ENCODE measurements at regions of chr16 and their contacts with region 1.

Region 1: DNA sequence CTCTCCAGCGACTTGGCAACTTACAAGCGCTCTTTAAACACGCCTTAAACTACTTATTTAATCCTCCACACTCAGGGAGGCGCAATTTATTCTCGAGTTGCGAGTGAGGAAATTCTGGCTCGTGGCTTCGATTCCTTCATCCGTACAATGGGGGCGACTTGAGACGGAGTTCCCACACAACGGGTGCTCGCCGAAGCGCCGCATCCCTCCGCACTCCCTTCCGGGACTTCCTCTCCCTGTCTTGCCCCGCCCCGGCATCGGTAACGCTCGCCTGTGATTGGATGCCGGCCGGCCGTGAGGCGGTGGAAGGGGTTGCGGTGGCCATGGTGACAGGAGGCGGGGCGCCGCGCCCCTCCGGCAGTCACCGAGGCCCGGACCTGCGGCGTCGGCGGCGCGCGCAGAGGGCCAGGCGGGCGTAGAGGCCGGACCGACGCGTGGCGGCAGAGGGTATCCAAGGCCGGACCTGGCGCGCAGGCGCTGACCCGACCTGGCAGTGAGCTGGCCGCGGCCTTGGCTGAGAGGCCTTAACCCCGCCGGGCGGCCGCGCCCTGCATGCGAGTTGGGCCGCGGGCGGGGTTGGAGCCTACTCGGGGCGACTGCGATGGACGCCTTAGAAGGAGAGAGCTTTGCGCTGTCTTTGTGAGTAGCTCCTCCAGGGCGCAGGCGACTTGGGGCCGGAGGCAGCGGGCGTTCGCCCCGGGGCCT is at the start of gene ARL2BP:
- DNase-seq: peak; percentile 99
- ATAC-seq: peak; percentile 99
- H3K4me3 ChIP-seq: peak within 1 kb of the TSS; percentile 55 to 97
- H3K27ac ChIP-seq: peak within 1 kb of the TSS; percentile 78 to 85
- H3K4me1 ChIP-seq: no peaks in the 10 kb centered on the region
- H3K27me3 ChIP-seq: no peaks in the 10 kb centered on the region
- total RNA-seq, gene ARL2BP: 39.1 to 47.5 TPM

Region 2: GRCh38 chr16:57113042-57113453 is 131.9 kb before region 1 on chr16:
- intact Hi-C with region 1: no loop called
- DNase-seq: no peak
- ATAC-seq: no peak
- H3K4me3 ChIP-seq: no peak overlapping the region
- H3K27ac ChIP-seq: peak overlapping the region in 1 of 2 donors; percentile 21
- H3K4me1 ChIP-seq: no peaks in the 10 kb centered on the region
- H3K27me3 ChIP-seq: no peaks in the 10 kb centered on the region

Region 3: DNA sequence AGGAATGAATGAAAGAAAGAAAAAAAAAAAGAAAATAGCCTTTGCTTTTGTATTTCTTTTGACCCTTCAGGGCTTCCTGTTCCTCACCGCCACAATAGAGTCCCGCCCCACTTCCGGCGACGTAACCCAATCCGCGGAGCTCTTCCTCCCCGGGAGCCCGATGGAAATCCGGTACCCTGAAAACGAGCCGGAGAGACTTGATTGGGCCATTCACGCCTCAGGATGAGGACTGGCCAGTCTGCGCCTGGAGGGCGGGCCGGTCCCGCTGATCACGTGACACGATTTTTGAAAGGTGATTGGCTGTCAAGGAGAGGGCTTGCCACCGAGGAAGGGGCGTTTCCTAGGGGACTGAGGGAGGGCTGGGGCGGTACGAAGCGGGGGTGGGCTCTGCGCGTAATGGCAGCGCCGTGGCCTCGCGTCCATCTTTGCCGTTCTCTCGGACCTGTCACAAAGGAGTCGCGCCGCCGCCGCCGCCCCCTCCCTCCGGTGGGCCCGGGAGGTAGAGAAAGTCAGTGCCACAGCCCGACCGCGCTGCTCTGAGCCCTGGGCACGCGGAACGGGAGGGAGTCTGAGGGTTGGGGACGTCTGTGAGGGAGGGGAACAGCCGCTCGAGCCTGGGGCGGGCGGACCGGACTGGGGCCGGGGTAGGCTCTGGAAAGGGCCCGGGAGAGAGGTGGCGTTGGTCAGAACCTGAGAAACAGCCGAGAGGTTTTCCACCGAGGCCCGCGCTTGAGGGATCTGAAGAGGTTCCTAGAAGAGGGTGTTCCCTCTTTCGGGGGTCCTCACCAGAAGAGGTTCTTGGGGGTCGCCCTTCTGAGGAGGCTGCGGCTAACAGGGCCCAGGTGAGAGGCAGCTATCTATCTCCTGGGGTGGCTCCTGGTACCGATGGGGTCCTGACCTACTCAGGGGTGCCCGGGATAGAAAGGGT is 58.7 kb before region 1 on chr16 and contains the starts of genes PSME3IP1 and RSPRY1:
- intact Hi-C with region 1: loop called in 1 of 2 experiments (anchors 5 kb)
- DNase-seq: peak; percentile 98 to 99
- ATAC-seq: peak; percentile 99
- H3K4me3 ChIP-seq: peak within 1 kb of the TSS; percentile 58 to 88
- H3K27ac ChIP-seq: peak within 1 kb of the TSS; percentile 79 to 88
- H3K4me1 ChIP-seq: peaks cover under 1 to 6% of the 10 kb centered on the region in 2 donors
- H3K27me3 ChIP-seq: no peaks in the 10 kb centered on the region
- total RNA-seq, gene PSME3IP1: 59.8 to 85.7 TPM
- total RNA-seq, gene RSPRY1: 30.9 to 32.5 TPM

Region 4: DNA sequence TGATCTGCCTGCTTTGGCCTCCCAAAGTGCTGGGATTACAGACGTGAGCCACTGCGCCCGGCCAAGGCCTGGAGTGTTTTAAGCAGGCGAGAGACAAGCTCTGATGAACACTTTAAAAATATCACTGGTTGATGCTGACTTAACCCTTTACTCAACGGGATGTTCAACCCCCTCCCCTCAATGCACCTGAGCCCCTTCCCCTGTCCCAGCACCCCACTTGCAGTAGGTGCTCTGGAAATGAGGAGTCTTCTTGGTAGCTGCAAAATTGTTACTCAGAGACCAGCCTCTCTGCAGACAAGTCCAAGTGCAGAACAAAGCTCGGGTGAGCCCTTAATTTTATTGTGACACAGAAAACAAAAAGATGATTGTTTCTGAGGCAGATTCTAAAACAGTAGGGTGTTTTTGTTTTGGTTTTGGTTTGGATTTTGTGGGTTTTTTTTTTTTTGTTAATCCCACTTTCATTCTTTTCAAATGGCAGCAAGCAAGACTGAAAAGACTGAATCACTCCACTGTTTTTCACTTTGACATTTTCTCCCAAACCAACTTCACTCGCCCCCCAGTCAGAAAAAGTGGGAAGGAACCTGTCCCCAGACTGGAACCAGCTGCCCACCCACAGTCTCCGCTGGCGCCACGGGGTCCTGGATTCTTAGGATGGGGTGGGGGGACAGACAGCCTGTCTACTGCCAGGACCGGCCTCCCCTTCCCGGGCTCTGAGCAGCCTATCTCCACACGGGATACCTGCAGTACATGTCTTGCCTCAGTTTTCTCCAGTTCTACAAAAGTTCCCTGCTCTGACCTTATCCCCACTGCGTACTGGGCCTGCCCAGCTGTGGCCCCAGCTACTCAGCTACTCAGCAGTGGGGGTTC is 44.7 kb after region 1 on chr16:
- intact Hi-C with region 1: no loop called
- DNase-seq: peak in 1 of 2 donors; percentile 51
- ATAC-seq: no peak
- H3K4me3 ChIP-seq: no peak overlapping the region
- H3K27ac ChIP-seq: no peak overlapping the region
- H3K4me1 ChIP-seq: no peaks in the 10 kb centered on the region
- H3K27me3 ChIP-seq: no peaks in the 10 kb centered on the region

Region 5: DNA sequence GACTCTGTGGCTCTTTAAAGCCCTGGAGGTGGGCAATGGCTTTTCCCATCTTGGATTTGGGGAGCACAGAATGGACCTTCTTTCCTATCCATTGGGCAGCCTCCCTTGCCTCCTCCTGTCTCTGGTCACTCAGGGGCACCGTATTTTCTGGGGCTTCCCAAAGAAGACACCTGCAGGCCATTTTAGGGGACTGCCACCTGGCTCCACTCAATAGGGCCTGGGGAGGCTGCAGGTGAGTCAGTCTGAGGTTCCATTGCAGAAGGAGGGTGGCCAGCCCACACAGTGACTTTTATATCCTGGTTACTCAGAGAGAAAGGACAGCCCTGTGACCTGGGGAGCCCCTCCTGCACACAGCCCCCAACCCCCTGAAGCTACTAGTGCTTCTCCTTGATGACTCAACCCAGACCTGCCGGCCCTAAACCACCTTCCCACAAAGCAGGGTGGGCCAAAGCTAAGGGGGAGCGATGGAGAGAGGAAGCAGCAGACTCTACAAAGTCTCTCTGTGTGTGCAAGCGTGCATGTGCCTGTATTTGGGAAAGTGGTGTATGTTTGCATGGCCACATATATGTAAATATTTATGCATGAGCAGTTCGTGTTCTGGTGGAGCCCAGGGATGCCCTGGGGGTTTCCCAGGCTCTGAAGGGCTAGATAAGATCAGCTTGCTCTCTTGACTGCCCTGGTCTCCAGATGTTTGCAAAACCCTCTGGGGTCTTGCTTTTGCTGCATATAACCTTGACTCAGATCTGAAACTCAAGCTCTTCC is 132.3 kb after region 1 on chr16:
- intact Hi-C with region 1: no loop called
- DNase-seq: peak in 1 of 2 donors; percentile 32
- ATAC-seq: no peak
- H3K4me3 ChIP-seq: no peak overlapping the region
- H3K27ac ChIP-seq: peak overlapping the region in 1 of 2 donors; percentile 9
- H3K4me1 ChIP-seq: peaks cover 0 to 6% of the 10 kb centered on the region in 2 donors
- H3K27me3 ChIP-seq: no peaks in the 10 kb centered on the region